ENCODE measurements at regions of chr21 and their contacts with region 1.

Region 1: GRCh38 chr21:17472592-17473271 is 40.1 kb upstream of the CXADR start:
- DNase-seq: peak; percentile 99
- ATAC-seq: peak; percentile 92
- H3K4me3 ChIP-seq: peak overlapping the region in 1 of 3 experiments; percentile 37; a peak in 1 of 6 replicates
- H3K27ac ChIP-seq: peak overlapping the region; percentile 94
- H3K4me1 ChIP-seq: peaks cover 85% of the 10 kb centered on the region
- H3K27me3 ChIP-seq: no peaks in the 10 kb centered on the region
- CTCF ChIP-seq: no peak
- EP300 ChIP-seq: peak; percentile 88 to 94
- POLR2A ChIP-seq: no peak
- RAD21 ChIP-seq: no peak

Region 2: DNA sequence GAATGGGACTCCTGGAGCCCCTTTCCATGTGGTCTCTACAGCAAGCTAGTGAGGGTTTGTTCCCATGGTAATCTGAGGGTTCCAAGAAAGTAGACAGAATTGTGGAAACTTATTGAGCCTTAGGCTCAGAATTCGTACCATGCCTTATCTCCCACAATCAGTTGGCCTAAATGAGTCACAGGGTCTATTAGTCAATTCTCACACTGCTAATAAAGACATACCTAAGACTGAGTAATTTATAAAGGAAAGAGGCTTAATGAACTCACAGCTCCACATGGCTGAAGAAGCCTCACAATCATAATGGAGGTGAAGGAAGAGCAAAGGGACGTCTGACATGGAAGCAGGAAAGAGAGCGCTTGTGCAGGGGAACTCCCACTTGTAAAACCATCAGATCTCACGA is 66.5 kb before region 1 on chr21:
- CTCF ChIA-PET with region 1: no interaction called
- POLR2A ChIA-PET with region 1: no interaction called
- in situ Hi-C with region 1: no loop called
- intact Hi-C with region 1: no loop called
- DNase-seq: no peak
- ATAC-seq: no peak
- H3K4me3 ChIP-seq: no peak overlapping the region
- H3K27ac ChIP-seq: no peak overlapping the region
- H3K4me1 ChIP-seq: no peaks in the 10 kb centered on the region
- H3K27me3 ChIP-seq: no peaks in the 10 kb centered on the region; a peak in 1 of 5 replicates
- CTCF ChIP-seq: no peak
- EP300 ChIP-seq: no peak
- POLR2A ChIP-seq: no peak
- RAD21 ChIP-seq: no peak

Region 3: DNA sequence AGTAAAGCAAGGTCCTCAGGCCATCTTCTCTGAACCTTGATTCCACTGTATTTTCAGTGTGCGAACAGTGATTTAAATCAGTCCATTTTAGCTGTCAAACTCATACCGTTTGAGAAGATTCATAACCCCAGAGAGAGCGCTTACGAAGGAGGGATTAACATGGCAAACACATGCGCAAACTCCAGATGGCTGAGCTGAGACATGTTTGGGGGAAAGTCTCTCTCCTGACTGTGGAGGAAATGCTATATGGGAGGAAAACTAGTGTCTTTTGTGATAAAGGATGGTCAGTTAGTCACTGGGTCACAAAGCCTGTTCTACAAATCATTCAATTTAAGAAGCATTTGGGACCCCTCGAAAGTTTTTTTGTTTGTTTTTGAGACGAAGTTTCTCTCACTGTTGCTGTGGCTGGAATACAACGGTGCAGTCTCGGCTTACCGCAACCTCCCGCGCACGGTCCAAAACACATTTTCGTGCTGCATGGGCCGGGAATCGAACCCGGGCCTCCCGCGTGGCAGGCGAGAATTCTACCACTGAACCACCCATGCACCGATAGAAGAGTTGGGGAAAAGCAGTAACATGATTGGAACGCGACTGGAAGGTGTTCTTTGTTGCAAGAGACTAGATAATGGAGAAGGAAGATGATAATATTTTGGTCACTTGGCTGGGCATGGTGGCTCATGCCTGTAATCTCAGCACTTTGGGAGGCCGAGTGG is 18.3 kb before region 1 on chr21:
- CTCF ChIA-PET with region 1: no interaction called
- POLR2A ChIA-PET with region 1: interaction called, 18 read pairs
- in situ Hi-C with region 1: no loop called
- intact Hi-C with region 1: loop called (anchors 1 kb)
- DNase-seq: peak; percentile 91
- ATAC-seq: peak; percentile 96
- H3K4me3 ChIP-seq: peak overlapping the region; percentile 54 to 78 (median 73)
- H3K27ac ChIP-seq: peak overlapping the region; percentile 83
- H3K4me1 ChIP-seq: peaks cover 42% of the 10 kb centered on the region
- H3K27me3 ChIP-seq: no peaks in the 10 kb centered on the region
- CTCF ChIP-seq: 0 out of 2 replicates have a peak, but pooled peaks have one; percentile 3
- EP300 ChIP-seq: peak in 1 of 2 experiments; percentile 25; a peak in 1 of 4 replicates
- POLR2A ChIP-seq: no peak
- RAD21 ChIP-seq: peak; percentile 35; the same call in 1 of the 2 replicates

Region 4: DNA sequence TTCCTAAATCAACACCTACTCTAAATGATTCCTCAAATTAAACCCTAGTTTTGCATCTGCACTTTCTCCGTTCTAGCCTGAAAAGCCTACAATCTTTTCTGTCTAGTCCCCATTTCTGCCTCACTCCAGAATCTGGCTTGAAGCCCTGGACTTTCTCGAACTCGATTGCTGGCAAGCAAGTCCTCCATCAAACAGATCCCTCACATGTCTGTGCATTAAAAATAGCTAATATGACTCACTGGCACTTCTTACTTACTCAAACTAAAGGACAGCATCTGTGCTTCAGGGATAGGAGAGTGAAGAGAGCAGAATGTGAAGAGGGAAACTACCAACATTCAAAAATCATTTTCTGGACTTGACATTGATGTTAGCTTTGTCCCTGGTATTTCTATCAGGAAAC is 11.7 kb before region 1 on chr21:
- CTCF ChIA-PET with region 1: no interaction called
- POLR2A ChIA-PET with region 1: interaction called, 18 read pairs
- in situ Hi-C with region 1: no loop called
- intact Hi-C with region 1: loop called (anchors 1 kb)
- DNase-seq: no peak
- ATAC-seq: no peak
- H3K4me3 ChIP-seq: no peak overlapping the region
- H3K27ac ChIP-seq: peak overlapping the region; percentile 80
- H3K4me1 ChIP-seq: peaks cover 45% of the 10 kb centered on the region
- H3K27me3 ChIP-seq: no peaks in the 10 kb centered on the region
- CTCF ChIP-seq: no peak
- EP300 ChIP-seq: no peak
- POLR2A ChIP-seq: no peak
- RAD21 ChIP-seq: no peak

Region 5: GRCh38 chr21:17650292-17650691 is 177.6 kb after region 1 on chr21:
- CTCF ChIA-PET with region 1: no interaction called
- POLR2A ChIA-PET with region 1: no interaction called
- in situ Hi-C with region 1: no loop called
- intact Hi-C with region 1: no loop called
- DNase-seq: peak; percentile 32
- ATAC-seq: peak; percentile 71
- H3K4me3 ChIP-seq: no peak overlapping the region; a peak in 1 of 6 replicates
- H3K27ac ChIP-seq: no peak overlapping the region
- H3K4me1 ChIP-seq: peaks cover 14% of the 10 kb centered on the region
- H3K27me3 ChIP-seq: no peaks in the 10 kb centered on the region
- CTCF ChIP-seq: no peak
- EP300 ChIP-seq: peak in 1 of 2 experiments; percentile 35; a peak in 1 of 4 replicates
- POLR2A ChIP-seq: no peak
- RAD21 ChIP-seq: no peak

Region 6: GRCh38 chr21:17819114-17819876 is 346.6 kb after region 1 on chr21 and contains the start of gene C21orf91:
- CTCF ChIA-PET with region 1: no interaction called
- POLR2A ChIA-PET with region 1: no interaction called
- in situ Hi-C with region 1: no loop called
- intact Hi-C with region 1: no loop called
- DNase-seq: peak; percentile 56
- ATAC-seq: peak; percentile 96
- H3K4me3 ChIP-seq: peak within 1 kb of the TSS; percentile 89 to 96 (median 93)
- H3K27ac ChIP-seq: peak within 1 kb of the TSS; percentile 90
- H3K4me1 ChIP-seq: peaks cover 22% of the 10 kb centered on the region
- H3K27me3 ChIP-seq: no peaks in the 10 kb centered on the region; a peak in 1 of 5 replicates
- CTCF ChIP-seq: no peak
- EP300 ChIP-seq: no peak
- POLR2A ChIP-seq: peak; percentile 84 to 92
- RAD21 ChIP-seq: no peak
- total RNA-seq, gene C21orf91: 7.8 and 13.0 TPM in 2 replicates

Region 7: DNA sequence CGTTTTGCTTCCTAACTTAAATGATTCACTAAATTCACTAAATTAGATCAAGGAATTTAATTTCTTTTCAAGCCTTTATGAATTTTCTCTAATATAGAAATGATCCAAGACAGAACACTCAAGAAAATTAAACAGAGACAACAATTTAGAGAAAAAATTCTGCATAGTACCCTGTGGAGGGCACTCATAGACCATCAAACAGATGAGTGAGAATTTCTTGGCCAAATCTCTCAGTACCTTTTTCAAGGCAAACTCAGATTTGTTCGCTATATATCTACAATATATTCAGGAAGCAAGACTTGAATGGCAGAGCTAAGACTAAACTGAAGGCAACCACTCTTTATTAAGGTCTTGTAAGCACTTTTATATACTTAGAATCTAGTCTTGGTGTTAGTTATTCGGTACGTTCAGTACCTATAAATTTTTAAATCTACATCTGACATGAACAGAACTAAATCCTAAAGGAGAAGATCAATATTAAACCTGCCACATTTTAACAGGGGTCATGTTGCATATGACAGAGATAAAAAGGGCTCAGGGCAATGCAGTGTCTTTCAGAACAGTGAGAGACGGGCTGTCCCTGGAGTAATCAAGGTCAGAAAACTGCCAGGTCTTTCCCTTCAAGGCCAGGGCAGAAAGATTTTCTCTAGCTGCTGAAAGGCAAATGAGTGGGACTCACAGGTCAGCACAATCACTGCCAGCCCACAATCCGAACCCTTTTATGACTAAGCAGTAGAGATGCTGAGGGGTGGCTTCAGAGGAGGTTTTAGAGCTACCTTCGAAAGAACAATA is 1049.6 kb after region 1 on chr21:
- CTCF ChIA-PET with region 1: no interaction called
- POLR2A ChIA-PET with region 1: no interaction called
- in situ Hi-C with region 1: no loop called
- intact Hi-C with region 1: no loop called
- DNase-seq: no peak
- ATAC-seq: no peak
- H3K4me3 ChIP-seq: no peak overlapping the region
- H3K27ac ChIP-seq: no peak overlapping the region
- H3K4me1 ChIP-seq: no peaks in the 10 kb centered on the region
- H3K27me3 ChIP-seq: no peaks in the 10 kb centered on the region
- CTCF ChIP-seq: no peak
- EP300 ChIP-seq: no peak
- POLR2A ChIP-seq: no peak
- RAD21 ChIP-seq: no peak

Measured in HepG2 (cell line).